CD8-positive, alpha-beta T cell (primary cell): ENCODE measurements at regions of chr15 and their contacts with region 1.

Region 1: GRCh38 chr15:90716976-90717821 is at the start of gene BLM:
- DNase-seq: peak; percentile 89 to 98 (median 93)
- ATAC-seq: peak; percentile 99
- H3K4me3 ChIP-seq: peak within 1 kb of the TSS; percentile 82 to 95
- H3K4me3 Mint-ChIP-seq: peak within 1 kb of the TSS; percentile 95
- H3K27ac ChIP-seq: peak within 1 kb of the TSS; percentile 78 to 95
- H3K27ac Mint-ChIP-seq: peak within 1 kb of the TSS; percentile 91
- H3K4me1 ChIP-seq: peaks cover 12% of the 10 kb centered on the region
- H3K4me1 Mint-ChIP-seq: peaks cover 31% of the 10 kb centered on the region
- H3K27me3 ChIP-seq: no peaks in the 10 kb centered on the region
- H3K27me3 Mint-ChIP-seq: no peaks in the 10 kb centered on the region
- CTCF ChIP-seq: peak; percentile 21
- total RNA-seq, gene BLM: 2.5 to 2.6 TPM

Region 2: DNA sequence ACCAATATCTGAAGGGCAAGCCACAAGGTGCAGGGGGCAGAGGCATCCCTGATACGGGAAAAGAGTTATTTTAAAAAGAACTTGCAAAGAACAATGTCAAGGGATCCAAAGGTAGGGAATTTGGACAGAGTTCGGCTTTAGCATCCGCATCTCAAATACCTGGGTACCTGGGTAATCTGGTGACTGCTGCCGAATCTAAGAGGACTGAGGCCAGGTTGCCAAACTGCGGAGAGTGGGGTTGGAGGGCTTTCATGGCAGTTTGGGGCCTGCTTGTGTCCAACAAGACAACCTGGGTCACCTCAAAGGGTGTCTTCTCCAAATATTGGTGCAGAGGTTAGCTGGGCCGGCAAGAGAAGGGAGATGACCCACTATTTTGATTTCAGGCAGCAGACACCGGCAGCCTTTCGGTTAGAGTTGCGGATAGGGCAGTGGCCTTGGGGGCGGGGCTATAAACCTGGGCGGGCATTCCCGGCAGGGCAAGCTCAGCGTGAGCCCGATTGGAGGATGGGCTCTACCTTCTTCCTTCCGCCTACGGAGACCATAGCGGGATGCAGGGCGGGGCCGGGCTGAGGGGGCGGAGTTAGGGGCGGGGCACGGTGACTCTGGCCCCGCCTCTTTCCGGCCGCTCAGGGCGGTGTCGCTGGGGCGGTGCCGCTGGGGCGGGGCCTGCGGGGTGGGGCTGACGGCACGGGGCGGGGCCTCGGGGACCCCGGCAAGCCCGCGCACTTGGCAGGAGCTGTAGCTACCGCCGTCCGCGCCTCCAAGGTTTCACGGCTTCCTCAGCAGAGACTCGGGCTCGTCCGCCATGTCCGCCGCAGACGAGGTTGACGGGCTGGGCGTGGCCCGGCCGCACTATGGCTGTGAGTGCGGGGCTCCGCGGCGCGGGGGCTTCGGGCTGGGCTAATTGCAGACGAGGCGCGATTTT is 329.4 kb before region 1 on chr15 and contains the start of gene IQGAP1:
- CTCF ChIA-PET with region 1: no interaction called
- POLR2A ChIA-PET with region 1: no interaction called
- intact Hi-C with region 1: loop called in 1 of 2 experiments (anchors 1 kb)
- DNase-seq: peak; percentile 92 to 97 (median 95)
- ATAC-seq: peak; percentile 91
- H3K4me3 ChIP-seq: peak within 1 kb of the TSS; percentile 90 to 94
- H3K4me3 Mint-ChIP-seq: peak within 1 kb of the TSS; percentile 90
- H3K27ac ChIP-seq: peak within 1 kb of the TSS; percentile 86 to 90
- H3K27ac Mint-ChIP-seq: peak within 1 kb of the TSS; percentile 96
- H3K4me1 ChIP-seq: peaks cover 44% of the 10 kb centered on the region
- H3K4me1 Mint-ChIP-seq: peaks cover 45% of the 10 kb centered on the region
- H3K27me3 ChIP-seq: no peaks in the 10 kb centered on the region
- H3K27me3 Mint-ChIP-seq: no peaks in the 10 kb centered on the region
- CTCF ChIP-seq: no peak
- total RNA-seq, gene IQGAP1: 57.4 to 69.5 TPM

Region 3: DNA sequence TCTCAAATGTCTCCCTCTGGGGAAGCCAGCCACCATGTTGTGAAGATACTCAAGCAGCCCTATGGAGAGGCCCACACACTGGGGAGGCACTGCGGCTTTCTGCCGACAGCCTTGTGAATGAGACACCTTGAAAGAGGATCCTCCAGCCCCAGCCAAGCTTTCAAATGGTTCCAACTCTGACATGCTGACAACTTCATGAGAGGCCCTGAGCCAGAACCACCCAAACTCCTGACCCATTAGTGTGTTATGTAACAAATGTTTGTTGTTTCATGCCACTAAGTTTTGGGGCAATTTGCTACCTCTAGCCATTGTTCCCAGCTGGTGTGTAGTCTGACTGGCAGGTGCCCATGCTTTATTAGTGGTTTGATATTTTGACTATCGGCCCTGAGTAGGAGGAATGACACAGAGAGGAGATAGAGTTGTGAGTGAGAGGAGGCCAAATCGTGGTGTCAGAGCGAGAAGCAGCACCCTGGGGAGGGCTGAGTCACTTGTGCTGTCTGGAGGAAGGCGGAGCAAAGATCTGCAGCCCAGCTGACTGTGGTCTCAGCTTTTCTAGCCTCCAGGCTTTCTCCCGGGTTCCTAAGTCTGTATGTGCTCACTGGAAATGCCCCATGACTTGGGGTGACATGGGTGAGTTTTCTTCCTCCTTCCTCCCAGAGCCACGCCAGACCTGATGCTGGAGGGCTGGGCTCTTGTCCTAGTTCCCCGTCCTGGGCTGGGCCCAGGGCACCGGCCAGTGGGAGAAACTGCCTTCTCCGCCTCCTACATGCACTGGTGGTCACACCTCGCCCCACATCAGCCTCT is 56.8 kb before region 1 on chr15:
- CTCF ChIA-PET with region 1: no interaction called
- POLR2A ChIA-PET with region 1: interaction called, 5 read pairs
- intact Hi-C with region 1: loop called (anchors 2 kb)
- DNase-seq: peak in 8 of 9 experiments; percentile 51 to 75 (median 72)
- ATAC-seq: peak; percentile 83
- H3K4me3 ChIP-seq: peak overlapping the region; percentile 32 to 70
- H3K4me3 Mint-ChIP-seq: peak overlapping the region; percentile 70
- H3K27ac ChIP-seq: no peak overlapping the region
- H3K27ac Mint-ChIP-seq: no peak overlapping the region
- H3K4me1 ChIP-seq: peaks cover 75% of the 10 kb centered on the region
- H3K4me1 Mint-ChIP-seq: peaks cover 83% of the 10 kb centered on the region
- H3K27me3 ChIP-seq: peaks cover 0 to 26% of the 10 kb centered on the region in 2 experiments
- H3K27me3 Mint-ChIP-seq: peaks cover 9% of the 10 kb centered on the region
- CTCF ChIP-seq: no peak

Region 4: GRCh38 chr15:90839187-90840071 is 122.2 kb after region 1 on chr15:
- CTCF ChIA-PET with region 1: no interaction called
- POLR2A ChIA-PET with region 1: no interaction called
- intact Hi-C with region 1: loop called in 1 of 2 experiments (anchors 1 kb)
- DNase-seq: peak in 1 of 9 experiments; percentile 44
- ATAC-seq: no peak
- H3K4me3 ChIP-seq: peak overlapping the region in 1 of 2 experiments; percentile 14
- H3K4me3 Mint-ChIP-seq: peak overlapping the region; percentile 43
- H3K27ac ChIP-seq: no peak overlapping the region
- H3K27ac Mint-ChIP-seq: peak overlapping the region; percentile 77
- H3K4me1 ChIP-seq: peaks cover 39% of the 10 kb centered on the region
- H3K4me1 Mint-ChIP-seq: peaks cover 30% of the 10 kb centered on the region
- H3K27me3 ChIP-seq: no peaks in the 10 kb centered on the region
- H3K27me3 Mint-ChIP-seq: no peaks in the 10 kb centered on the region
- CTCF ChIP-seq: no peak

Region 5: GRCh38 chr15:90902040-90902839 is 185.0 kb after region 1 on chr15:
- CTCF ChIA-PET with region 1: interaction called, 4 read pairs
- POLR2A ChIA-PET with region 1: interaction called, 9 read pairs
- intact Hi-C with region 1: loop called (anchors 2 kb)
- DNase-seq: peak; percentile 42 to 88 (median 70)
- ATAC-seq: peak; percentile 69
- H3K4me3 ChIP-seq: peak overlapping the region; percentile 65 to 89
- H3K4me3 Mint-ChIP-seq: peak overlapping the region; percentile 92
- H3K27ac ChIP-seq: peak overlapping the region; percentile 65 to 73
- H3K27ac Mint-ChIP-seq: peak overlapping the region; percentile 93
- H3K4me1 ChIP-seq: peaks cover 15% of the 10 kb centered on the region
- H3K4me1 Mint-ChIP-seq: peaks cover 28% of the 10 kb centered on the region
- H3K27me3 ChIP-seq: no peaks in the 10 kb centered on the region
- H3K27me3 Mint-ChIP-seq: no peaks in the 10 kb centered on the region
- CTCF ChIP-seq: peak; percentile 84

Region 6: DNA sequence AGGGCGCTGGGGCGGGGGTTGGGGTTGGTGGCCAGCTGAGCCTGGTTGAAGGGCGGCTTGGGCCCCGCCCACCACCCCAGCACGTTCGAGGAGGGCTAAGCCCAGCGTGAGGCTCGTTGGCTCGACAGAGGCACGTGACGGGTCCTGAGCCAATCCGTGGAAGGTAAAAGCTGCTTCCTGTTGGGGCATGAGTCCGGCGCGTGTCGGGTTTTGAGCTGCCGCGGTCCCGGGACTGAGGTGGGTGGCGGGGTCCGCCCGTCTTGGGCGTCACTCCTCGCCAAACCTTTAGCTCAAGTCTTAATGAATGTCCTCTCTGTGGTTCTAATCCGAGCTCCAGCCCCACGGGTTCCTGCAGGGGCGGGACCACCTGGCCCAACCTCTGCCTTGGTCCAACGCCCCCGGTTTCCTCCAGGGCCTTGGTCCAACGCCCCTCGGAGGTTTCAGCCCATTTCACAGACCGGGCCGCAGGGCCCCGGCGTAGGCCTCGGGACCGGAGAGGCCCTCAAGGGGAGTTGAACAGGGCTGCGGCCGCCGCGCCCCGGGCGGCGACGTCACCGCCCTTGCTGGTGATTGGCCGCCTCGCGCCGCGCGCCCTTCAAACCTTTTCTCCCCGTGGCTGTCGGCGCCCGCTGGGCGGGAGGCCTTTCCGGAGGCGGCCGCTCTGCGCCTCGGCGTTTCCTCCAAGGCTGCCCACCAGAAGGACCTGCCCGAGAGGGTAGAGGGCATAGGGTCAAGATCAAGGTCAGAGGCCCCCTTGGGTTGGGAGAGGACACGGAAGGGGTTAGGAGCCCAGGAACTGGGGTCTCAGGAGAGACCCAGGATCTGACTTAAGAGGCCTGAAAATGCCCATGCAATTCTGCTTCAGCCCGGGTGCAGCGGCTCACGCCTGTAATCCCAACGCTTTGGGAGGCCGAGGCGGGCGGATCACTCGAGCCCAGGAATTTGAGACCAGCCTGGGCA is 237.8 kb after region 1 on chr15 and contains the start of gene RCCD1:
- CTCF ChIA-PET with region 1: no interaction called
- POLR2A ChIA-PET with region 1: no interaction called
- intact Hi-C with region 1: no loop called
- DNase-seq: peak; percentile 63 to 94 (median 87)
- ATAC-seq: peak; percentile 94
- H3K4me3 ChIP-seq: peak within 1 kb of the TSS; percentile 87 to 97
- H3K4me3 Mint-ChIP-seq: peak within 1 kb of the TSS; percentile 87
- H3K27ac ChIP-seq: peak within 1 kb of the TSS; percentile 90 to 97
- H3K27ac Mint-ChIP-seq: peak within 1 kb of the TSS; percentile 92
- H3K4me1 ChIP-seq: peaks cover 16% of the 10 kb centered on the region
- H3K4me1 Mint-ChIP-seq: peaks cover 10% of the 10 kb centered on the region
- H3K27me3 ChIP-seq: no peaks in the 10 kb centered on the region
- H3K27me3 Mint-ChIP-seq: no peaks in the 10 kb centered on the region
- CTCF ChIP-seq: no peak
- total RNA-seq, gene RCCD1: 3.9 to 4.1 TPM